PC-3 (cell line): ENCODE measurements at regions of chr6 and their contacts with region 1.

Region 1: DNA sequence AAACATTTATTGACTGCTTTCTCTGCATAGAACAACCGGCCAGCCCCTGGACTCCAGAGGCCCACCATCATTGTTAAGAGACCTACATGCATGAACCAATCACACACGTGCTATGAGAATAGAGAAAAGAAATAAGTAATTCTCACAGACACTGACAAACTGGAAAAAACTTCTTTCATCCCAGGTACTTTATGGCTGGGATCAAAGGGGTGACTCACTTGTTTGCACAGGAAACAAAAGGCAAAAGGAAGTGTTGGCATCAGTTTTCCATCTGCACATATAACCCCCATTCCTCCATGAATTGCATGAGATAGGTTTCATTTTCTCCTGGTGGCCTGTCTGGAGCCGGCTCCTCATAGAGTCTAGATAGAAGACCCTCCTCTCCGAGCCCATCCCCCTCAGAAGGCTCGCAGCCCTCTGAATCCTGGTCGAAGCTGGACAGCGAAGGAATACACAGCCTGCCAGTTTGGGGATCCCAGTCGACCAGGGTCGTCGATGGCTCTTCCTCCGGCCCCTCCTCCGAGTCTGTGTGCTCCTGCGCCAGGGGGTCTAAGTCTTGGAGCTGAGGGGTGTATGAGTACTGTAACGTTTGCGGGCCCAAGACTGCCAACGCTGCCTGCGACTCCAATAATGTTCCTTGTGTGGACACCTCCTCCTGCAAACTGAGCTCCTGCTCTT is 43.3 kb downstream of the IL20RA start:
- DNase-seq: peak; percentile 84
- ATAC-seq: peak; percentile 75
- H3K4me3 ChIP-seq: peak overlapping the region; percentile 46; the same call in 1 of the 2 replicates
- H3K27ac ChIP-seq: peak overlapping the region; percentile 96
- H3K4me1 ChIP-seq: peaks cover 33% of the 10 kb centered on the region
- H3K27me3 ChIP-seq: no peaks in the 10 kb centered on the region
- CTCF ChIP-seq: no peak

Region 2: GRCh38 chr6:136987528-136987927 is 13.9 kb before region 1 on chr6:
- CTCF ChIA-PET with region 1: no interaction called
- POLR2A ChIA-PET with region 1: no interaction called
- intact Hi-C with region 1: no loop called
- DNase-seq: peak; percentile 59
- ATAC-seq: peak; percentile 46
- H3K4me3 ChIP-seq: peak overlapping the region; percentile 13; the same call in 1 of the 2 replicates
- H3K27ac ChIP-seq: 0 out of 2 replicates have a peak overlapping the region, but pooled peaks have one; percentile 9
- H3K4me1 ChIP-seq: peaks cover 19% of the 10 kb centered on the region
- H3K27me3 ChIP-seq: no peaks in the 10 kb centered on the region
- CTCF ChIP-seq: no peak

Region 3: DNA sequence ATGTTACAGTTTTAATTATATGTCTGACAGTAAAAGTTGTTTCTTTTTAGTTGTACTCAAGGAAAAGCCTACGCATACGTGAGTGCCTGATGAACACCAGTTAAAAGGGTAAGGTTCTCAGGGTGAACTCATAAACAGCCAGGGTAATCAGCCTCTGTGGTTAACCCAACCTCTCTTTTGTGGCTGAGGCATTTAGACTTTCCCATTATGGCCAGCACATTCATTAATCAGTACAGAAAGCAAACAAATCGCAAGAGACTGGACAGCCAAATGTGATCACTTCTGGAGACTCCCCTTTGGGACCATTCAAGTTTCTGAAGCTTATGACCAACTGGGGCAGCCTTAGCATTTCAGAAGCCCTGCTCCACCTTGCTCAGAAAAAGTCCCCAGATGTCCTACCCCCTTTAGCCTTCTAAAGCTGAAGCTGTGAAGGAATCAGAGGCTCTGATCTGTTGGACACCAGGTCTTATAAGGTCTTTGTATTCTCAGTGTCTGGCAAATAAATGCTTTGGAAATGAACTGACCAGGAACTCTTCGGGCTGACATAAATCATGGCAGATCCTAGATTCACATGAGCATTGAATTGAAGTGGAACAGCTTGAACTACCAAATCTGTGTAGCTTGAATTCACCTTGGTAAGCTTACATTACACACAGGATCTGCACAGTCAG is 24.5 kb after region 1 on chr6:
- CTCF ChIA-PET with region 1: no interaction called
- POLR2A ChIA-PET with region 1: no interaction called
- intact Hi-C with region 1: loop called (anchors 2 kb)
- DNase-seq: peak; percentile 80
- ATAC-seq: peak; percentile 42
- H3K4me3 ChIP-seq: peak overlapping the region; percentile 41
- H3K27ac ChIP-seq: peak overlapping the region; percentile 97
- H3K4me1 ChIP-seq: peaks cover 61% of the 10 kb centered on the region
- H3K27me3 ChIP-seq: no peaks in the 10 kb centered on the region
- CTCF ChIP-seq: no peak